PC-9 (cell line): ENCODE measurements at regions of chr11 and their contacts with region 1.

Region 1: GRCh38 chr11:46800177-46800576 is 45.9 kb downstream of the CKAP5 start:
- DNase-seq: no peak
- H3K4me3 ChIP-seq: no peak overlapping the region
- H3K27ac ChIP-seq: no peak overlapping the region
- H3K4me1 ChIP-seq: no peaks in the 10 kb centered on the region
- H3K27me3 ChIP-seq: no peaks in the 10 kb centered on the region
- CTCF ChIP-seq: no peak

Region 2: DNA sequence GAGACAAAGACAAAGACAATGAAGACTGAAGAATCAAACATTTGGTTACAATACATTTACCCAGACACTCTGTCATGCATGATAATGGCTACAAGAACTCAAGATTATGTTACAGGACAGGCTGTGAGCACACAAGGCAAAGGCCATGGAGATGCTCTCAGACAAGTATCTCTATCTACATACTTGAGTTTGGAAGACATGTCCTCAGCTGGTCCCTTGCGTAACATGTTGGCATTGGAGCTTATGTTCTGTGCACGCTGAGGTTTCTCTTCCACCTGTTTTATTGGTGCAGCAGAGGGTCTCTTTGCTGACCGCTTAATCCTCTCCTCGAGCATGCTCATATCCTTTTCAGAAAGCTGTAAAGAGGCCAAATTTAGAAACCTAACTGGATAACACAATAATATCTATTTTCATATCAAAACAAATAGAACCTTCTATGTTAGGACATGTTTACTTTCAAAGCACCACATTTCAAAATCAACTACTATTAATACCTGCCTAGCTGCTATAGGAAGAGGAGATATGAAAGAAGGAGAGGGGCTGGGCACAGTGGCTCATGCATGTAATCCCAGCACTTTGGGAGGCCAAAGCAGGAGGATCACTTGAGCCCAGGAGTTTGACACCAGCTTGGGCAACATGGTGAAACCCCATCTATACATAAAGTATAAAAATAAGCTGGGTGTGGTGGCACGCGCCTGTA is 39.6 kb before region 1 on chr11:
- CTCF ChIA-PET with region 1: no interaction called
- POLR2A ChIA-PET with region 1: no interaction called
- intact Hi-C with region 1: loop called (anchors 5 kb)
- DNase-seq: no peak
- H3K4me3 ChIP-seq: no peak overlapping the region
- H3K27ac ChIP-seq: no peak overlapping the region
- H3K4me1 ChIP-seq: no peaks in the 10 kb centered on the region
- H3K27me3 ChIP-seq: no peaks in the 10 kb centered on the region
- CTCF ChIP-seq: no peak